ENCODE measurements at regions of chr20 and their contacts with region 1.

Region 1: GRCh38 chr20:44683263-44684046 is 31.7 kb upstream of the CCN5 start:
- DNase-seq: no peak
- H3K4me3 ChIP-seq: no peak overlapping the region
- H3K27ac ChIP-seq: no peak overlapping the region
- H3K4me1 ChIP-seq: peaks cover 0 to 19% (median 3%) of the 10 kb centered on the region in 3 donors
- H3K27me3 ChIP-seq: no peaks in the 10 kb centered on the region
- CTCF ChIP-seq: peak; percentile 24 to 67 (median 46)
- POLR2A ChIP-seq: no peak

Region 2: DNA sequence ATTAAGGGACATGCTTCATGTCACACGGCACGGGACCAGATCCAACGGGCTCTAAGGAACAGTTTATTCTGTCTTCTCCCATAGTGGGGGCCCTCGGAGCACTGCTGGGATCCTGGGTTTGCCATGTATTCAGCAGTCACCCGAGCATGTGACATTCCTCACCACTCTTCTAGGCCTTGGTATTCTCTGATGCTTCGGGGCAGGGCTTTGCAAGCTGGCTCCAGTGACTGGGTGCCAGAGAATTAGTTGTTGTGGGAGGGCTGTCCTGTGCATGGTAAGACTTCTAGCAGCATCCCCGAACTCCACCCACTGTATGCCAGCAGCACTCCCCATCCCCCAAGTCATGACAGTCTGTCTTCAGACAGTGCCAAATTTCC is 37.1 kb after region 1 on chr20:
- intact Hi-C with region 1: no loop called
- DNase-seq: no peak
- H3K4me3 ChIP-seq: no peak overlapping the region
- H3K27ac ChIP-seq: peak overlapping the region; percentile 43 to 91 (median 80)
- H3K4me1 ChIP-seq: peaks cover 35 to 67% (median 38%) of the 10 kb centered on the region in 3 donors
- H3K27me3 ChIP-seq: no peaks in the 10 kb centered on the region
- CTCF ChIP-seq: no peak
- POLR2A ChIP-seq: no peak

Region 3: GRCh38 chr20:44733341-44734069 is 50.0 kb after region 1 on chr20:
- intact Hi-C with region 1: loop called (anchors 5 kb)
- DNase-seq: no peak
- H3K4me3 ChIP-seq: no peak overlapping the region
- H3K27ac ChIP-seq: no peak overlapping the region
- H3K4me1 ChIP-seq: peaks cover 5 to 23% (median 15%) of the 10 kb centered on the region in 3 donors
- H3K27me3 ChIP-seq: no peaks in the 10 kb centered on the region
- CTCF ChIP-seq: peak; percentile 62 to 93 (median 90)
- POLR2A ChIP-seq: no peak

Region 4: GRCh38 chr20:44866703-44867335 is 183.4 kb after region 1 on chr20:
- intact Hi-C with region 1: loop called (anchors 2 kb)
- DNase-seq: no peak
- H3K4me3 ChIP-seq: peak overlapping the region in 1 of 4 donors; percentile 35
- H3K27ac ChIP-seq: no peak overlapping the region
- H3K4me1 ChIP-seq: peaks cover 4 to 26% (median 6%) of the 10 kb centered on the region in 3 donors
- H3K27me3 ChIP-seq: peaks cover 0 to 14% (median 0%) of the 10 kb centered on the region in 4 donors
- CTCF ChIP-seq: no peak
- POLR2A ChIP-seq: no peak

Region 5: GRCh38 chr20:45088247-45088646 is 404.8 kb after region 1 on chr20:
- intact Hi-C with region 1: no loop called
- DNase-seq: no peak
- H3K4me3 ChIP-seq: no peak overlapping the region
- H3K27ac ChIP-seq: no peak overlapping the region
- H3K4me1 ChIP-seq: peaks cover 0 to 8% (median 0%) of the 10 kb centered on the region in 3 donors
- H3K27me3 ChIP-seq: no peaks in the 10 kb centered on the region
- CTCF ChIP-seq: no peak
- POLR2A ChIP-seq: no peak